Panc1 (cell line): ENCODE measurements at regions of chr6 and their contacts with region 1.

Region 1: GRCh38 chr6:125858427-125859320 is 67.9 kb downstream of the NCOA7 start:
- DNase-seq: peak; percentile 18
- ATAC-seq: peak; percentile 100
- H3K4me3 ChIP-seq: no peak overlapping the region
- H3K27ac ChIP-seq: no peak overlapping the region
- H3K4me1 ChIP-seq: no peaks in the 10 kb centered on the region
- H3K27me3 ChIP-seq: no peaks in the 10 kb centered on the region
- CTCF ChIP-seq: peak; percentile 94

Region 2: GRCh38 chr6:125956506-125957390 is 98.1 kb after region 1 on chr6 and contains the start of gene HINT3:
- CTCF ChIA-PET with region 1: interaction called, 16 read pairs
- POLR2A ChIA-PET with region 1: no interaction called
- in situ Hi-C with region 1: no loop called
- intact Hi-C with region 1: loop called (anchors 2 kb)
- DNase-seq: peak; percentile 92
- ATAC-seq: peak; percentile 97
- H3K4me3 ChIP-seq: peak within 1 kb of the TSS; percentile 72 to 87
- H3K27ac ChIP-seq: peak within 1 kb of the TSS; percentile 81
- H3K4me1 ChIP-seq: peaks cover 23% of the 10 kb centered on the region
- H3K27me3 ChIP-seq: no peaks in the 10 kb centered on the region
- CTCF ChIP-seq: peak; percentile 100
- total RNA-seq, gene HINT3: 11.5 TPM

Region 3: DNA sequence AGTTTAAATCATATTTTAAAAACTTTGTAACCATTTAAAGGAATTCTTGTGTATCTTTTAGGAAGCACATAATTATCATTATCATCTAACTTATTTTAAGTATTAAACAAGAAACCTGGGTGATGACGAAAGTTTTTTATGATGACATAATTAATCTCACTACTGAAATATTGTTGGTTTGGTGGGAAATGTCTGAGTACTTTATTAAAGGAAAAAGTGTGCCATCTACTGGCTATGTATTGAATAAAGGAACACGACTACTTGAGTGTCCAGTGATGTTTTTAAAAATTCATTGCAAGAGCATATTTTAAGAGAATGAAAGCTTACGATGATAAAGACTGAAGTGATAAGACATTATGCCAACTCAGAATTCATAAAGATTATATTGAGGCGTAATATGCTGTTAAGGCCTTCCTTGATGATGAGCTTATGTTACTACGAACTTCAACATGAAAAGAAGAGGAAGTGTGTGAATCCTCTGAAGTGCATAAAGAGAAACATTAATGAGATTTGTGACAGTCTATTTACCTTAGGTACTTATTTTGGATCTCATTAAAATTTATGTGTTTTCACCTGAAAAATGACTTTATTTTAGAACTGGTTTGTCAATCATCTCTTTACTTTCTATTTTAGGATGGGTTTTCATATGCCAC is 115.7 kb after region 1 on chr6:
- CTCF ChIA-PET with region 1: no interaction called
- POLR2A ChIA-PET with region 1: interaction called, 3 read pairs
- in situ Hi-C with region 1: no loop called
- intact Hi-C with region 1: loop called (anchors 2 kb)
- DNase-seq: no peak
- ATAC-seq: peak; percentile 91
- H3K4me3 ChIP-seq: no peak overlapping the region
- H3K27ac ChIP-seq: no peak overlapping the region
- H3K4me1 ChIP-seq: no peaks in the 10 kb centered on the region
- H3K27me3 ChIP-seq: no peaks in the 10 kb centered on the region
- CTCF ChIP-seq: peak; percentile 67; the same call in 1 of the 2 replicates